ENCODE measurements at regions of chr10 and their contacts with region 1.

Region 1: GRCh38 chr10:67618116-67618515 is 77.9 kb downstream of the CTNNA3 start:
- DNase-seq: peak; percentile 92
- ATAC-seq: peak; percentile 94
- H3K4me3 ChIP-seq: no peak overlapping the region
- H3K27ac ChIP-seq: no peak overlapping the region
- H3K4me1 ChIP-seq: peaks cover 5% of the 10 kb centered on the region
- H3K27me3 ChIP-seq: no peaks in the 10 kb centered on the region
- CTCF ChIP-seq: no peak
- POLR2A ChIP-seq: no peak
- RAD21 ChIP-seq: no peak

Region 2: GRCh38 chr10:67764012-67764822 is 146.1 kb after region 1 on chr10:
- CTCF ChIA-PET with region 1: no interaction called
- POLR2A ChIA-PET with region 1: no interaction called
- dilution Hi-C with region 1: no loop called
- in situ Hi-C with region 1: no loop called
- intact Hi-C with region 1: loop called (anchors 5 kb)
- DNase-seq: peak; percentile 89
- ATAC-seq: peak; percentile 87
- H3K4me3 ChIP-seq: peak overlapping the region; percentile 86
- H3K27ac ChIP-seq: peak overlapping the region; percentile 76
- H3K4me1 ChIP-seq: no peaks in the 10 kb centered on the region
- H3K27me3 ChIP-seq: no peaks in the 10 kb centered on the region
- CTCF ChIP-seq: no peak
- POLR2A ChIP-seq: no peak
- RAD21 ChIP-seq: no peak

Region 3: DNA sequence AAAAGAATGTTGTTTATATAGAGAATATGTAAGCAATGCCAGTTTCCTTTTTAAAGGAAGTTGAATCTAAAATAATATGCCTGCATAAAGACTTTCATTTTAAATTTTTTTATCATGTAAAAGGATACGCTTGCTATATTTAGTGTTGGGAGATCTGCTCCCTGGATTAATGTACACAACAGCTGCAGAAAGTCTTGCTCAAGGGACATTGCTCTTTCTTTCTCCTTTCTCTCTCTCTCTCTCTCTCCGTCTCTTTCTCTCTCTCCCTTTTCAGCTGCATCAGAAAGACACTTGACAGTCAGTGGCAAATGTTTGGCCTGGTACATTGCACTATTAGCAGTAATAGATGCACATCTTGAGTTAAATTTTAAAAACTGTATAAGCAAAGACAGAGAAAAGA is 491.9 kb after region 1 on chr10:
- CTCF ChIA-PET with region 1: no interaction called
- POLR2A ChIA-PET with region 1: no interaction called
- dilution Hi-C with region 1: no loop called
- in situ Hi-C with region 1: no loop called
- intact Hi-C with region 1: no loop called
- DNase-seq: peak; percentile 81
- ATAC-seq: peak; percentile 46
- H3K4me3 ChIP-seq: peak overlapping the region; percentile 37; the same call in 1 of the 2 replicates
- H3K27ac ChIP-seq: peak overlapping the region; percentile 2; the same call in 1 of the 2 replicates
- H3K4me1 ChIP-seq: peaks cover 9% of the 10 kb centered on the region
- H3K27me3 ChIP-seq: no peaks in the 10 kb centered on the region
- CTCF ChIP-seq: no peak
- POLR2A ChIP-seq: no peak
- RAD21 ChIP-seq: no peak

Measured in IMR-90 (cell line).